Mammary epithelial cell (primary cell): ENCODE measurements at regions of chr14 and their contacts with region 1.

Region 1: DNA sequence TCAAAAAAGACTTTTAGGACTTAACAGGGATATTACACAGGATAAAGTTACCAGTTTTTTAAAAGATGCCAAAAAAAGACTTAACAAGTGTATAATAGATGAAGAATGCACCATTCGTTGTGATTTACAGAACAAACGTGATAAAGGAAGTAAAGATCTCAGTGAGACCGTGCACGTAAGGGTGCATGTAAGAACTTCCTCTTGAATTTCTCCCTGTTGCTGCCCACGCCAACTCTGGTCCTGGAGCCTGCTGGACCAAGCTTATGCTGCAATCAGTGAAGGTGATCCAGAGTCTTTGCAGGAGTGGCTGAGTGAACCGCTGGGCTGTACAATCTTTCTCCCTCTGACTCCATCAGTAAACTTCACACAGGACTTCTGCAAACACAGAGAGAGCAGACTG is 593.7 kb downstream of the TMEM121 start:
- DNase-seq: no peak
- H3K4me3 ChIP-seq: no peak overlapping the region
- H3K27ac ChIP-seq: no peak overlapping the region
- H3K4me1 ChIP-seq: no peaks in the 10 kb centered on the region
- H3K27me3 ChIP-seq: no peaks in the 10 kb centered on the region
- CTCF ChIP-seq: no peak

Region 2: DNA sequence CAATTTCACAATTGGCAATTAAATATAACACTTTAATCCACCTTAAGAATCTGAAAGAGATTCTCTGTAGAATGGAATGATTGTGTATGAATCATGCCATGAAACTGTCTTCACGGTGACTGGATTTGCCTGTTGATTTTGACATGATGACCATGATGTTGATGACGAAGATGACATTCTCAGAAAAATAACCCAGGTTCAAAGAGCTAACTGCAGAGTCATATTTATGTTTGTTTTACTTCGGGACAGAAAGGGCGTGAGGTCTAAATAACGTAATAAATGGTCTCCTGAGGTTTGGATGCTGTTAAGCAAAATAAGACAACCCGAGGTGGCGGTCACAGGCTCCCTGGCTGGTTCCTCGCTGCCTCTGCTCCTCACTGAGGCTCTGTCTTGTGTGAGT is 61.8 kb before region 1 on chr14:
- CTCF ChIA-PET with region 1: no interaction called
- dilution Hi-C with region 1: loop called (anchors 5 kb)
- in situ Hi-C with region 1: no loop called
- intact Hi-C with region 1: no loop called
- DNase-seq: no peak
- H3K4me3 ChIP-seq: no peak overlapping the region
- H3K27ac ChIP-seq: no peak overlapping the region
- H3K4me1 ChIP-seq: no peaks in the 10 kb centered on the region
- H3K27me3 ChIP-seq: no peaks in the 10 kb centered on the region
- CTCF ChIP-seq: no peak

Region 3: DNA sequence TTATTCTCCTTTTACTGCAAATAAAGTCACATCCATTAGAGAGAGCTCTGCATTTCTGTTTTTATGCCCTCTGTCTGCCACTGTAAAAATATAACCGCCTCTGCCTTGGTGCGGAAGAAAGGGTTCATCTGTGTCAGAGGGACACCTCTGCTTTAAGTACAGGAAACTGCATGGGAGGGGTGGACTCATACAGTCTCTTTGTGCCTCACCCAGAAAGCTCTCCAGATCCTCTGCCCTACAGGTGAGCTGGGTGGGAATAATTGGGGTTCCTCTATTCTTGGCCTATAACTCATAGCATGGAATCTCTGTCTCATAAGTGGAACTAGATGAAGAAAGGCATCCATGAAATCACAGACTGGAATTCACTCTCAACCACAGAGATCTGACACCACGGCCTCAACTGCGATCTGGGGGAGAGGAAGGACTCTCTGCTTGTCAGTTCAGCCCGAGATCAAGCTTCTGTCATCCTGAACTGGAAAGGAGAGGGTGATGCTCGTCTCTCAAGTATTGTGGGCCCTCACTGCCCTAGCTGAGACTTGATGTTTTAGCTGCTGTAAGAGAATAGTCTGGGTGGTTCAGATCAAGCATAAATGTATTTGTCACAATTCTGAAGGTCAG is 108.5 kb after region 1 on chr14:
- CTCF ChIA-PET with region 1: no interaction called
- dilution Hi-C with region 1: loop called (anchors 5 kb)
- in situ Hi-C with region 1: no loop called
- intact Hi-C with region 1: no loop called
- DNase-seq: no peak
- H3K4me3 ChIP-seq: no peak overlapping the region
- H3K27ac ChIP-seq: no peak overlapping the region
- H3K4me1 ChIP-seq: no peaks in the 10 kb centered on the region
- H3K27me3 ChIP-seq: no peaks in the 10 kb centered on the region
- CTCF ChIP-seq: no peak